ENCODE measurements at regions of chr3 and their contacts with region 1.

Region 1: GRCh38 chr3:134794950-134795745 is at the start of gene EPHB1:
- DNase-seq: peak; percentile 90
- total RNA-seq, gene EPHB1: 1.1 TPM

Region 2: DNA sequence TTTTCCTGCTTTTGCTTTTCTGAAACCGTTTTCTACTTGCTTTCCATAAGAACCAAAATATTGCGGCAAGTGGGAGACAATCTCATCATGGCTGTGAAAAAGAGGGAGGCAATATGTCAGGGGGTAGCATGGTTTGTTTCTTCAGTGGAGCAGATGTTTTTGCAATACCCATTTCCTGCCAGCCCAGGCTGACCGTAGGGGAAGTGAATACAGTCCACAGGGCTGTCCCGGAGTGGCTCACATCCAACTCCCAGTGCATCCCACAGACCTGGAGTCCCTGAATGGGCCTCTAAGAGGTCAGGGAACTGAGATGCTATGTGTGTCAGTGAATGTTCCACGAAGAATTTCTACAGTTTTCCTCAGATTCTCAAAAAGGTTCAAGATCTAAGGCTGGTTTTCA is 69.5 kb after region 1 on chr3:
- intact Hi-C with region 1: no loop called
- DNase-seq: peak; percentile 75

Region 3: GRCh38 chr3:135243616-135244015 is 448.5 kb after region 1 on chr3:
- intact Hi-C with region 1: loop called (anchors 2 kb)
- DNase-seq: no peak

Region 4: GRCh38 chr3:135503760-135504686 is 708.9 kb after region 1 on chr3:
- intact Hi-C with region 1: loop called (anchors 2 kb)
- DNase-seq: no peak

Region 5: DNA sequence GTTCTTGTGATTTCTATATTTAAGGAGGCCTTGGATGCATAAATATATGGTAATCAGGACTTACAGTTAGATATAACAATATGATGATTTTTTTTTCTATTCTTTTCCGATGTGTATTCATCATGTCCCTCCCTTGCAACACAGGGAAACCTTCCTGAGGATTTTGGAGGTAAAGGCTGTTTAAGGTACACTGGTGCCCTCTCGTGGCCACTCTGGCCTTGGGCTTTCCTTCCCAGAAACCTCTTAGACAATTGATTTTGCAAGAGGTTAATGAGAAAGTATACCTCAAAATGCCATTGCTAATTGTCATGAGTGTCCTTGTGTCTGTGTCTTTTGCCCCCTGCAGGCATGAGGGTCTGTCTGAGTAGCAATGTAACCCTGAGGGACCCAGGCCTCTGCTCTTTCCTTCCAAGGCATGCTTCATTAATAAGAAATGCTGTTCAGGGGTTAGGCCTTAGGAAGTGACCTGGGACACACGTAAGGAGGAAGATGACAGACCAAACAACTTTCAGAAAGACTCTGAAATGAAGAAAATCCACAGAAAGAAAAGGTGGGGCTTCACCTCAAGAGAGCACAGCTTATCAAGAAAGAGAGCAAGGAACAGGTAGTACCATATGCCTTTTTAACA is 1100.1 kb after region 1 on chr3:
- intact Hi-C with region 1: loop called (anchors 2 kb)
- DNase-seq: no peak

Measured in cardiac septum (tissue), 1 donor.